Aorta (tissue), 5 donors: ENCODE measurements at regions of chr17 and their contacts with region 1.

Region 1: GRCh38 chr17:38799378-38800236 is at the start of gene PIP4K2B:
- DNase-seq: peak; percentile 98
- ATAC-seq: peak; percentile 97
- H3K4me3 ChIP-seq: peak within 1 kb of the TSS; percentile 63 to 68
- H3K27ac ChIP-seq: peak within 1 kb of the TSS; percentile 92 to 93
- H3K4me1 ChIP-seq: peaks cover 0 to 7% of the 10 kb centered on the region in 2 donors
- H3K27me3 ChIP-seq: no peaks in the 10 kb centered on the region
- total RNA-seq, gene PIP4K2B: 32.4 to 48.4 TPM

Region 2: GRCh38 chr17:38667099-38667786 is 132.4 kb before region 1 on chr17:
- intact Hi-C with region 1: no loop called
- DNase-seq: peak in 1 of 2 donors; percentile 74
- ATAC-seq: peak; percentile 82
- H3K4me3 ChIP-seq: no peak overlapping the region
- H3K27ac ChIP-seq: no peak overlapping the region
- H3K4me1 ChIP-seq: no peaks in the 10 kb centered on the region
- H3K27me3 ChIP-seq: no peaks in the 10 kb centered on the region

Region 3: GRCh38 chr17:38752119-38752929 is 47.3 kb before region 1 on chr17 and contains the start of gene PSMB3:
- intact Hi-C with region 1: loop called in 1 of 2 experiments (anchors 5 kb)
- DNase-seq: peak; percentile 98 to 99
- ATAC-seq: peak; percentile 92
- H3K4me3 ChIP-seq: peak within 1 kb of the TSS; percentile 63 to 81
- H3K27ac ChIP-seq: peak within 1 kb of the TSS in 1 of 2 donors; percentile 84
- H3K4me1 ChIP-seq: no peaks in the 10 kb centered on the region
- H3K27me3 ChIP-seq: no peaks in the 10 kb centered on the region
- total RNA-seq, gene PSMB3: 99.9 to 109 TPM

Region 4: GRCh38 chr17:38768417-38768816 is 31.2 kb before region 1 on chr17:
- intact Hi-C with region 1: loop called in 1 of 2 experiments (anchors 2 kb)
- DNase-seq: no peak
- ATAC-seq: no peak
- H3K4me3 ChIP-seq: no peak overlapping the region
- H3K27ac ChIP-seq: no peak overlapping the region
- H3K4me1 ChIP-seq: no peaks in the 10 kb centered on the region
- H3K27me3 ChIP-seq: no peaks in the 10 kb centered on the region

Region 5: DNA sequence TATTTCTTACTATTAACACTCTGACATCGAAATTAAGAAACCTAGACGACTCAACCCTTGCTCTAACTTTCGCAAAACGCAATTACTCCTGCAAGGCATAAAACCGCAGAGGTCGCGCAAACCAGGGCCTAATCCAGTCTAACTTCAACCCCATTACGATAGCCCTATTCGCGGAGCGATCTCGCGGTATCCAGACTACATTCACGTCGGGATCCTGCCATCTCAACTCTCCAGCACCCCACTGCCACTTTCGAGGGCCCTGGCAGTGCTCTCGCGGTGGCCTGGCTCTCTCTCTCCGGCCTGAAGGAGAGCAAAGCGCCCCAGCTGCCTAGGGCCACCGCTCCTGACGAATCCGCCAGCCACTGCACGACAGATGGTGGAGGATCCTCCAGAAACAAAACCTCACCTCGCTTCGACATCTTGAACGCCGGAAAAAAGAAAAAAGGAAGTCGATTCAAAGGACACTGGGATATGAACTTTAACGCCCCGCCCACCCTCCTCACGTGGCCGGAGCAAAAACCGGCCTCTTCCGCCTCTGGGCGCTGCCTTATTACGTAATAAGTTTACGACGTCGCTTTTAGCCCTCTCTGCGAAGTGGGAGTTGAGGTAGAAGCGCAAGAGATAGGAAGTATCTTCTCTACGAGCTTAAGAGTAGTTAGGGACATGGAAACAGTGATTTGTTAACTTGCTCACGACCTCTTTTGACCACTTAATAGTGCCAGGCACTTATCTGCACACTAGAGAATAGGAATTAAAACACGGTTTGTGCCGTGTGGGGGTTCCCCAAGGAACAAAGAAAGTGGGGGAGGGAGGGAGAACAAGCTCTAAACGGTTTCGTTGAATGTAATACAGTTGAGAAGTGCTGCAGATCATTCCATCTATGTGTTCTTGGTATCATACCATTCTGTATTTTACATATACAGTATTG is 53.9 kb after region 1 on chr17 and contains the start of gene RPL23:
- intact Hi-C with region 1: loop called in 1 of 2 experiments (anchors 2 kb)
- DNase-seq: peak; percentile 96 to 97
- ATAC-seq: peak; percentile 97
- H3K4me3 ChIP-seq: peak within 1 kb of the TSS; percentile 9 to 53
- H3K27ac ChIP-seq: peak within 1 kb of the TSS; percentile 46 to 60
- H3K4me1 ChIP-seq: peaks cover 0 to 5% of the 10 kb centered on the region in 2 donors
- H3K27me3 ChIP-seq: no peaks in the 10 kb centered on the region
- total RNA-seq, gene RPL23: 1,147 to 1,150 TPM

Region 6: DNA sequence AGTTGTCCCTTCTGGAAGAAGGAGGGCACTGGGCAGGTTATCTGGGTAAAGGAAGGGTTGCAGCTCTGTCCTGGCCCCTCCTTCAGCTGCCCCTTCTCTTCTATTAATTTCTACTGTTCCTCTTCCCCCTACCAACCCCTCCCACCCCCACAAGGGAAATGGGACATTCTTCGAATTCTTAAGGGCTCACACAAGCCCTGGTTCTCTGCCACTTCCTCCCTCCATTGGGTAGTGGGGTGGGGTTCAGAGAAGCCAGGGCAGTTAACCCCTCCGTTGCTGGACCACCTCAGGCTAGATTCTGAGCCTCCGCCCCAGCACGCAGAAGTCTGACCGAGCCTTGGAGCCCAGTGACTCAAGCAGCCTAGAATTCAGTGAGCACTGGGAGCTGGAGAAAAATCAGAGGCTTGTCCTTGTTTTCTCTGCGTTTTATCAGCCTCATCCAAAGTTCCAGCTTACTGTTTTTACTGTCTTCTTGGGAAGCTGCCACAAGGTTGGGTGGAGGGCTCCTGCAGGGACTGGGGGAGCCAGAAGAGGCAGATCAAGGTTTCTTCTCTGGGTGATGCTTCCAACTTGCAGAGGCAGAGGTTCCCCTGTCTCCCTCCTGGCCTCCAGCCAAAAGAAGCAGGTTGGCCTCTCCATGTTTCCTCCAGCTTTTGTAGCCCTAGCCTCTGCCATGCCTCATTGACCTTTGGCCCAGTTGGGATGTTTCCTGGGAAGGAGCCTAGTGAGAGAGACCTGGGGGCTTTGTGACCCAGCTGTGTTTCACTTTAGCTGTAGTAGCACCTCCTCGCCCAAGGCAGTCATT is 80.5 kb after region 1 on chr17:
- intact Hi-C with region 1: no loop called
- DNase-seq: peak; percentile 73 to 84
- ATAC-seq: peak; percentile 16
- H3K4me3 ChIP-seq: no peak overlapping the region
- H3K27ac ChIP-seq: peak overlapping the region; percentile 44 to 65
- H3K4me1 ChIP-seq: peaks cover 2 to 8% of the 10 kb centered on the region in 2 donors
- H3K27me3 ChIP-seq: no peaks in the 10 kb centered on the region